Activated CD8-positive, alpha-beta memory T cell treated with anti-CD3 and anti-CD28 coated beads, Interleukin-2, amount 10 ng/mL, durations not matched to agents 7 days and 5 days (primary cell): ENCODE measurements at regions of chr6 and their contacts with region 1.

Region 1: GRCh38 chr6:106223300-106223930 is 102.1 kb downstream of the ATG5 start:
- DNase-seq: peak; percentile 85
- ATAC-seq: peak; percentile 86
- H3K4me3 Mint-ChIP-seq: no peak overlapping the region
- H3K27ac Mint-ChIP-seq: no peak overlapping the region
- H3K4me1 Mint-ChIP-seq: peaks cover 43% of the 10 kb centered on the region
- H3K27me3 Mint-ChIP-seq: no peaks in the 10 kb centered on the region

Region 2: DNA sequence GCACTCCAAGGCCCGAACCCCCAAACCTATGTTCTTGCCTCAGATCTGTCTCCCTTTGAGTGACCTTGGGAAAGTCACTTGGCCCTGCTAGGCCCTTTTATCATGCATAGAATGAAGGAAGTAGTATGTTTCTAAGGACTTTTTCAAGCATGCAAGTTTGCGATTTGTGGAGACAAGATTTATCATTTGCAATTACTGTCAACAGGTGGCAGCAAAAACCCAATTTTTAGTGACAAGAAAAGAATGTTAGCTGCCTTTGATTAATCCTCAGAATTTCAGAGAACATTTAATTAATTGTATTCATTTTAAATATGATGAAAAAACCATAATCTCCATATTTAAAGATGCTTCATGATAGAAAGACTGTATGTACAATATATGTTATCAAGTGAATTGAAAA is 792.2 kb before region 1 on chr6:
- CTCF ChIA-PET with region 1: interaction called, 24 read pairs
- DNase-seq: no peak
- ATAC-seq: peak; percentile 45
- H3K4me3 Mint-ChIP-seq: no peak overlapping the region
- H3K27ac Mint-ChIP-seq: no peak overlapping the region
- H3K4me1 Mint-ChIP-seq: peaks cover 13% of the 10 kb centered on the region
- H3K27me3 Mint-ChIP-seq: no peaks in the 10 kb centered on the region

Region 3: DNA sequence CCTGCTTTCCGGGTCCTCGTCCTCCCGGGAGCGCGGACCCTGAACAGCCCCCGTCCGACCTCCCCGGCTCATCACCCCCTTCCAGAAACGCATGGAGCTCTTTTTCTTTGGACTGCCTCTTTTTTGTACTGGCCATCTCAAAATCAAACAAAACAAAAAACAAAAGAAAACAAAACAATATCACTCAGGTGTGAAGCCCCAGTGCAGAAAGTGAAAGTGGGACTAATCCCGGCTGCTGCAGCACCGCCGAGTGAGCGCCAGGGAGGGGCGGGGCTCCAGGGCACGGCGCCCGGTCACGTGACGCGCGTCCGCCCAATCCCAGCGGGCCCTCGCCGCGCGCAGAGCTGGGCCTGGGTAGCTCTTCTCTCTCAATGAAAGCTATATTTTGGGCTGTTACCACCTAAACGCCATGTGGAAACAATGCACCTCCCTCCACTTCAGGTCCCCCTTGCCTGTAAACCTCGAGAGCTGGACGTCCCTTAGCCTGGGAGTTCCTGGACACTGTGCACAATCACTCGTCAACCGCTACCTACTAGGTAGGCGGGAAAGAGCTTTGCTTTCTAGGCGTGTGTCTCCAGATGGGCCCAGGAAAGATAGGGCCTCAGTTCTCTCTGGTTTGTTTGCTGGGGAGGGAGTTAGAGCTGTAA is 231.0 kb before region 1 on chr6:
- CTCF ChIA-PET with region 1: interaction called, 10 read pairs
- DNase-seq: peak; percentile 93
- ATAC-seq: peak; percentile 84
- H3K4me3 Mint-ChIP-seq: peak overlapping the region; percentile 83
- H3K27ac Mint-ChIP-seq: peak overlapping the region; percentile 94
- H3K4me1 Mint-ChIP-seq: peaks cover 65% of the 10 kb centered on the region
- H3K27me3 Mint-ChIP-seq: peaks cover 10% of the 10 kb centered on the region

Region 4: GRCh38 chr6:106098383-106099234 is 124.8 kb before region 1 on chr6:
- CTCF ChIA-PET with region 1: interaction called, 29 read pairs
- DNase-seq: peak; percentile 92
- ATAC-seq: peak; percentile 73
- H3K4me3 Mint-ChIP-seq: peak overlapping the region; percentile 90
- H3K27ac Mint-ChIP-seq: peak overlapping the region; percentile 95
- H3K4me1 Mint-ChIP-seq: peaks cover 86% of the 10 kb centered on the region
- H3K27me3 Mint-ChIP-seq: no peaks in the 10 kb centered on the region

Region 5: GRCh38 chr6:106114492-106115265 is 108.7 kb before region 1 on chr6:
- CTCF ChIA-PET with region 1: interaction called, 27 read pairs
- DNase-seq: peak; percentile 91
- ATAC-seq: peak; percentile 82
- H3K4me3 Mint-ChIP-seq: peak overlapping the region; percentile 59
- H3K27ac Mint-ChIP-seq: peak overlapping the region; percentile 96
- H3K4me1 Mint-ChIP-seq: peaks cover 92% of the 10 kb centered on the region
- H3K27me3 Mint-ChIP-seq: no peaks in the 10 kb centered on the region

Region 6: DNA sequence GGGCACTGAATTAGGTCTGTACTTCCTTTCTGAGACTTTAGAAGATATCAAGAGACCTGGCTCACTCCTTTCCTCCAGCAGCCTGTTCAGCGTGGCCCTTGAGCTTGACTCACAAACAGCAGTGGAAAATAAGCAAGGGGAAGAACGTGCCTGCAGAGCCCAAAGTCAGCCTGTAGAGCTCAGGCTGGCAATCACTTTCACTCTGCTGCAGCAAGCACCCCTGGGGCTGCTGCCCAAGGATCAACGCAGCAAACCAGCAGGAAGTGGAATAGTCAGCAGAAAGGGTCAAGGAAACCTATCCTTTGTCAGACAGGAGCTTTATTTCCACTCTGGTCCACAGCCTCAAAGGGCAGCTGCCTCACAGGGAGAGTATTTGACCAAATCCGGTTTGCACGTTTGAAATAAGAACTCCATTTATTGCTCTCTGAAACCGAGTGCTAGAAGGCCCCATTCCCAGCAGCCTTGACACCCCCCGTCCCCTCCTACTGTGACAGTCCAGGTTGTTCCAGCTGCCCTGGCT is 59.9 kb before region 1 on chr6:
- CTCF ChIA-PET with region 1: interaction called, 26 read pairs
- DNase-seq: peak; percentile 87
- ATAC-seq: peak; percentile 62
- H3K4me3 Mint-ChIP-seq: peak overlapping the region; percentile 72
- H3K27ac Mint-ChIP-seq: peak overlapping the region; percentile 99
- H3K4me1 Mint-ChIP-seq: peaks cover 84% of the 10 kb centered on the region
- H3K27me3 Mint-ChIP-seq: no peaks in the 10 kb centered on the region